Ascending aorta (tissue), 2 donors: ENCODE measurements at regions of chr11 and their contacts with region 1.

Region 1: GRCh38 chr11:19938169-19938856 is 222.0 kb downstream of the DBX1 start:
- DNase-seq: peak in 1 of 2 donors; percentile 78
- H3K4me3 ChIP-seq: no peak overlapping the region
- H3K27ac ChIP-seq: peak overlapping the region in 1 of 2 donors; percentile 15
- H3K4me1 ChIP-seq: peaks cover 11 to 28% of the 10 kb centered on the region in 2 donors
- H3K27me3 ChIP-seq: no peaks in the 10 kb centered on the region
- CTCF ChIP-seq: peak; percentile 43 to 85 (median 77)

Region 2: GRCh38 chr11:20363500-20364411 is 425.4 kb after region 1 on chr11 and contains the start of gene HTATIP2:
- intact Hi-C with region 1: loop called (anchors 10 kb)
- DNase-seq: peak in 1 of 2 donors; percentile 82
- H3K4me3 ChIP-seq: peak within 1 kb of the TSS; percentile 91 to 99
- H3K27ac ChIP-seq: peak within 1 kb of the TSS; percentile 78 to 95
- H3K4me1 ChIP-seq: peaks cover 4 to 14% of the 10 kb centered on the region in 2 donors
- H3K27me3 ChIP-seq: no peaks in the 10 kb centered on the region
- CTCF ChIP-seq: no peak
- total RNA-seq, gene HTATIP2: 34.6 TPM